ENCODE measurements at regions of chr5 and their contacts with region 1.

Region 1: GRCh38 chr5:79924936-79925893 is 65.8 kb downstream of the MTX3 start:
- DNase-seq: peak; percentile 43
- ATAC-seq: peak; percentile 64; the same call in 1 of the 2 replicates
- H3K4me3 ChIP-seq: no peak overlapping the region
- H3K27ac ChIP-seq: no peak overlapping the region
- H3K4me1 ChIP-seq: no peaks in the 10 kb centered on the region
- H3K27me3 ChIP-seq: peaks cover 26% of the 10 kb centered on the region
- CTCF ChIP-seq: peak; percentile 60

Region 2: DNA sequence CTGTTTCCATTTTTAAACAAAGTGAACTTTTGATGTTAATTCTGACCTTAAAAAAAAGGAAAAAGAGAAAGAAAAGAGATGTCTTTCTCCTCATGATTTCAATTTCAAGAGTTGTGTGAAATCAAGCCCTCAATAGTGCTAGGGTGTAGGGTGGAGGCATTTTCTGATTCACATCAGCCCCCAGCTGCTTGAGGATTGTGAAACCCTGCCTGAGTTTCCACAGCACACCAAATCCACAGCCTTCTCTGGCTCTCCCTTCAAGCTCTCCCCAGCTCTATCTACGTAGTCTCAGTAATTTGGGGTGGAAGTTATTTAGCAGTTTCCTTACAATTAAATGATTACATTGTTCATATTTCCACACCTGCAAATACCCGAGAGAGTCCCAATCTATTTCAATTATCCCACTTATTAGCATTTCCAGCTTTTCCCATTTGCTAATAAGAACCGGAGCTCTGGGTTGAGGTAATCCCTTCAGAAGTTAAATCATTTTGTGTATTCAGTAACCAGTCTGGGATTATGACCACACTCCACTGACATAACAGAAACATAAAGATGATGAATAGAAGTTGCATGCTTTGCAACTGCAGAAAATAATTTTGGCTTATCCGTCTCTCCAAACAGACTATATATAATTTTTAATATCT is 10.9 kb after region 1 on chr5:
- CTCF ChIA-PET with region 1: no interaction called
- POLR2A ChIA-PET with region 1: no interaction called
- intact Hi-C with region 1: no loop called
- DNase-seq: no peak
- ATAC-seq: no peak
- H3K4me3 ChIP-seq: no peak overlapping the region
- H3K27ac ChIP-seq: no peak overlapping the region
- H3K4me1 ChIP-seq: no peaks in the 10 kb centered on the region
- H3K27me3 ChIP-seq: 0 out of 2 replicates have a peak, but pooled peaks cover 5% of the 10 kb centered on the region
- CTCF ChIP-seq: no peak

Region 3: GRCh38 chr5:80008995-80009765 is 84.0 kb after region 1 on chr5:
- CTCF ChIA-PET with region 1: no interaction called
- POLR2A ChIA-PET with region 1: no interaction called
- intact Hi-C with region 1: loop called (anchors 10 kb)
- DNase-seq: no peak
- ATAC-seq: no peak
- H3K4me3 ChIP-seq: no peak overlapping the region
- H3K27ac ChIP-seq: no peak overlapping the region
- H3K4me1 ChIP-seq: no peaks in the 10 kb centered on the region
- H3K27me3 ChIP-seq: no peaks in the 10 kb centered on the region
- CTCF ChIP-seq: no peak

Measured in PC-3 (cell line).